ENCODE measurements at regions of chr7 and their contacts with region 1.

Region 1: GRCh38 chr7:36686499-36686898 is 37.8 kb downstream of the AOAH start:
- DNase-seq: peak; percentile 73
- H3K4me3 Mint-ChIP-seq: peak overlapping the region; percentile 41
- H3K27ac Mint-ChIP-seq: peak overlapping the region; percentile 91
- H3K4me1 Mint-ChIP-seq: peaks cover 67% of the 10 kb centered on the region
- H3K27me3 Mint-ChIP-seq: no peaks in the 10 kb centered on the region

Region 2: GRCh38 chr7:36625247-36625646 is 61.3 kb before region 1 on chr7:
- intact Hi-C with region 1: no loop called
- DNase-seq: no peak
- H3K4me3 Mint-ChIP-seq: no peak overlapping the region
- H3K27ac Mint-ChIP-seq: no peak overlapping the region
- H3K4me1 Mint-ChIP-seq: peaks cover 19% of the 10 kb centered on the region
- H3K27me3 Mint-ChIP-seq: no peaks in the 10 kb centered on the region

Region 3: GRCh38 chr7:36707465-36707864 is 21.0 kb after region 1 on chr7:
- intact Hi-C with region 1: loop called (anchors 1 kb)
- DNase-seq: no peak
- H3K4me3 Mint-ChIP-seq: peak overlapping the region; percentile 42
- H3K27ac Mint-ChIP-seq: peak overlapping the region; percentile 85
- H3K4me1 Mint-ChIP-seq: peaks cover 64% of the 10 kb centered on the region
- H3K27me3 Mint-ChIP-seq: no peaks in the 10 kb centered on the region

Region 4: DNA sequence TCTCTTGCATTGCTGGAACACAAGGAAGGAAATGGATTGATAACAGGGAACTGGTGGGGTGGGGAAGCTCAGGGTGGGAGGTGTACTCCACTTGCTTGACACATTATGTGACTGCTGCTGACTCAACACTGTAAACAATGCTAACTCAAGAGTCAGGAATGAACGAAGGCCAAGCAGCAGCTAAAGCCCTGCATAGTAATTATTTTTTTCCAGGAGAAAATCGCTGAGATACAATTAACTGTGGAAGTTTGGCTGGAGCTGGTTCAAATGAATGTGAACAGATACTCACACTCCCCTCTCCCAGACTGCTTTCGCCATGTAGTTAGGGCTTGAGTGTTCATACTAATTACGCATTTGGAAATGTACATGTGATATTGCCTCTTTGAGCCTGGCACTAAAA is 208.7 kb after region 1 on chr7:
- intact Hi-C with region 1: no loop called
- DNase-seq: no peak
- H3K4me3 Mint-ChIP-seq: no peak overlapping the region
- H3K27ac Mint-ChIP-seq: no peak overlapping the region
- H3K4me1 Mint-ChIP-seq: peaks cover 14% of the 10 kb centered on the region
- H3K27me3 Mint-ChIP-seq: no peaks in the 10 kb centered on the region

Region 5: GRCh38 chr7:37281368-37282092 is 595.0 kb after region 1 on chr7:
- intact Hi-C with region 1: no loop called
- DNase-seq: no peak
- H3K4me3 Mint-ChIP-seq: no peak overlapping the region
- H3K27ac Mint-ChIP-seq: no peak overlapping the region
- H3K4me1 Mint-ChIP-seq: peaks cover 24% of the 10 kb centered on the region
- H3K27me3 Mint-ChIP-seq: no peaks in the 10 kb centered on the region